AG04449 (cell line): ENCODE measurements at regions of chr7 and their contacts with region 1.

Region 1: GRCh38 chr7:149125863-149126661 is at the start of gene ZNF425:
- DNase-seq: peak; percentile 24
- H3K4me3 ChIP-seq: peak within 1 kb of the TSS; percentile 96
- CTCF ChIP-seq: peak; percentile 97

Region 2: DNA sequence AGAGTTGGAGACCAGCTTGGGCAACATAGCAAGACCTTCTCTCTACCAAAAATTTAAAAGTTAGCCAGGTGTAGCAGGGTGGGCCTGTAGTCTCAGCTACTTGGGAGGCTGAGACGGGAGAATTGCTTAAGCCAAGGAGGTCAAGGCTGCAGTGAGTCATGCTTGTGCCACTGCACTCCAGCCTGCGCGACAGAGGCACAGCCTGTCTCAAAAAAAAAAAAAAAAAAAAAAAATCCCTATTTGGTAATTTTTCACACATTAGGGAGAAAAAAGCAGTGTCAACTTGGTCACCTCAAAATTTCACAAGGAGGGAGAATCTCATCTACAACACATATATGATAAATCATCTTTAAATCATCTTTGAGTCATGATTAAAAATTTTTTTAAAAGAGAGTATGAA is 14.8 kb after region 1 on chr7:
- CTCF ChIA-PET with region 1: interaction called, 42 read pairs
- POLR2A ChIA-PET with region 1: no interaction called
- DNase-seq: no peak
- H3K4me3 ChIP-seq: no peak overlapping the region
- CTCF ChIP-seq: no peak